Ascending aorta (tissue), 2 donors: ENCODE measurements at regions of chrX and their contacts with region 1.

Region 1: GRCh38 chrX:114959729-114960128 is 57.7 kb downstream of the IL13RA2 start:
- DNase-seq: no peak
- H3K4me3 ChIP-seq: no peak overlapping the region
- H3K27ac ChIP-seq: no peak overlapping the region
- H3K4me1 ChIP-seq: peaks cover 0 to 4% of the 10 kb centered on the region in 2 donors
- H3K27me3 ChIP-seq: no peaks in the 10 kb centered on the region
- CTCF ChIP-seq: peak; percentile 30 to 57 (median 30)

Region 2: DNA sequence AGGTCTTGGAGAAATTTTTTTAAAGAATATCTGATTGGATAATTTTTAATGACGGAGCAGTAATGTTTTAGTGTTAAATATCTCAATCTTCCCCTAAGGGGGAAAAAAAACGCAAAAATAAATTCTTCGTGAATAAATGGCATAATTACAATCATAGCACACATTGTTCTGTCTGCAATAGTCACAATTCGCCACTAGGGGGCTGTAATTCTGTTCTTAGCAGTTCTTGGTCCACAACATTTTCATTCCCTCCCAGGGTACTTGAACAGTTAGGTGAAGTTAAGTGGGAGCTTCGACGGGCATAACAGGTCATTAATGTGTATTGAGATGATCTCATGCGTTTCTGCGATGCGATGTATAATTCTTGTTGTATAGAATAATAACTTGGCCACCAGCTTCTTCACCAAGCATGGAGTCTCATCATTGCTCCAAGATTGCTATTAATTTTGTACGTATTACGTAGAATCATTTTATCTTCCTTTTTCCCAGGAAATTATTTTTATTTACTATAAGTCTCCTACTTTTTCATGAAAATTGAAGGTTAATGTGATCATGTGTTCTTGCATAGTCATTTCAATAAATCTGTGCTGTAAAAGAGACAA is 348.6 kb before region 1 on chrX:
- intact Hi-C with region 1: loop called (anchors 5 kb)
- DNase-seq: no peak
- H3K4me3 ChIP-seq: no peak overlapping the region
- H3K27ac ChIP-seq: no peak overlapping the region
- H3K4me1 ChIP-seq: no peaks in the 10 kb centered on the region
- H3K27me3 ChIP-seq: no peaks in the 10 kb centered on the region
- CTCF ChIP-seq: peak in 2 of 3 experiments; percentile 75 to 91

Region 3: DNA sequence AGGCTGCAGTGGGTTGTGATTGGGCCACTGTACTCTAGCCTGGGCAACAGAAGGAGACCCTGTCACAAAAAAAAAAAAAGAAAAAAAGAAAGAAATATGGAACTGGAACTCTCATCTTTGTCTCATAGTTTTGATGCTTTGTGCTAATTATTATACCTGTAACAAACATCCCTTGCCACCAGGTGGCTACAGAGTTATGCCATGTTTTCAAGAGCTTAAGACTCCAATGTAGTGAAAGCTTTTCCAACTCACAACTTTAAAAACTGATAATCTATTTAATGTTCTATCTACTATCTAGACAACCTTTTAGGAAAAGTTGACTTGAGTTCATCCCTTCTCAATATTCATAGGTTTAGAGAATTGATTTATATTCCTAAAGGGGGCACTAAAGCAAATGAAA is 333.4 kb before region 1 on chrX:
- intact Hi-C with region 1: loop called (anchors 1 kb)
- DNase-seq: no peak
- H3K4me3 ChIP-seq: no peak overlapping the region
- H3K27ac ChIP-seq: no peak overlapping the region
- H3K4me1 ChIP-seq: no peaks in the 10 kb centered on the region
- H3K27me3 ChIP-seq: no peaks in the 10 kb centered on the region
- CTCF ChIP-seq: peak in 1 of 3 experiments; percentile 38

Region 4: GRCh38 chrX:114819509-114819908 is 140.2 kb before region 1 on chrX:
- intact Hi-C with region 1: no loop called
- DNase-seq: no peak
- H3K4me3 ChIP-seq: no peak overlapping the region
- H3K27ac ChIP-seq: no peak overlapping the region
- H3K4me1 ChIP-seq: no peaks in the 10 kb centered on the region
- H3K27me3 ChIP-seq: no peaks in the 10 kb centered on the region
- CTCF ChIP-seq: no peak

Region 5: DNA sequence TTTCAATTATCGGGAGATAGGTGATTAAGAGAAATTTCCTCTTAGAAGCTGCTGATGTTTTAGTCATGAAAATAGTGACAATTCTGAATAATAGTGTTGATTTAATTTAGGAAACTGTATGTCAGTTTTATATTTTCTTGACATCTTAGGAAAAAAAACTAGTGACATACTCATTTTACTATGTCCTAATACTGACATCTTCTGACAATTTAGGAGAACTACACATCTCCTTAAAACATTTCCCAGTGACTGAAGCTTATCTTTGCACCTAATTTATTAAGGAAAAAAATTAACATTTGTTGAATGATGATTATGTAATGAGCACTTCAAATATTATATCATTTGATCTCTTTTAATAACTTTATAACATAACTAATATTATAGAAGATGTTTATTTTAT is 187.5 kb after region 1 on chrX:
- intact Hi-C with region 1: loop called (anchors 10 kb)
- DNase-seq: no peak
- H3K4me3 ChIP-seq: no peak overlapping the region
- H3K27ac ChIP-seq: no peak overlapping the region
- H3K4me1 ChIP-seq: no peaks in the 10 kb centered on the region
- H3K27me3 ChIP-seq: no peaks in the 10 kb centered on the region
- CTCF ChIP-seq: peak; percentile 6 to 54 (median 53)